K562 (cell line): ENCODE measurements at regions of chr22 and their contacts with region 1.

Region 1: DNA sequence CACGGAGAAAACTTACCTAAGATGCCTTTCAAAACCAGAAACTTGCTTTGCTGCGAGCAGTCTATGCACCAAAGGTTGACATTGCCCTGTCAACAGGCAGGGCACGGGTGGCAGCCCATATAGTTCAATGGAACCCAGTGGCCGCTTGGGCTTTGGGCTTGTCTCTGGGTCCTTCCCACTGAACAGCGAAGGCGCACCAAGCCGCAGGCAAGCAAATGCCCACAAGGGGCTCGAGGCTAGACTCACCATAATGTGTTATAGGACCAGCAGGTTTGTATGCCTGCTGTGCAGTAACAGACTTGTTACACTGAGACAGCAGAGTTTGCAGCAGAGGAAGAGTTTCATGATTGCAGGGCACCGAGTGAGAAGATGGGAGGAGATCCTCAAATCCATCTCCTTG is 20.3 kb downstream of the CLDN5 start:
- DNase-seq: peak in 2 of 4 experiments; percentile 48 to 52
- ATAC-seq: peak; percentile 50
- H3K4me3 ChIP-seq: no peak overlapping the region
- H3K27ac ChIP-seq: no peak overlapping the region
- H3K4me1 ChIP-seq: peaks cover 0 to 5% of the 10 kb centered on the region in 2 experiments; a peak in 1 of 5 replicates
- H3K27me3 ChIP-seq: no peaks in the 10 kb centered on the region
- CTCF ChIP-seq: peak; percentile 29 to 41 (median 37); a peak in 4 of 6 replicates
- EP300 ChIP-seq: no peak
- POLR2A ChIP-seq: peak; percentile 71
- RAD21 ChIP-seq: 0 out of 4 replicates have a peak, but pooled peaks of 1 of the 2 experiments have one; percentile 4

Region 2: DNA sequence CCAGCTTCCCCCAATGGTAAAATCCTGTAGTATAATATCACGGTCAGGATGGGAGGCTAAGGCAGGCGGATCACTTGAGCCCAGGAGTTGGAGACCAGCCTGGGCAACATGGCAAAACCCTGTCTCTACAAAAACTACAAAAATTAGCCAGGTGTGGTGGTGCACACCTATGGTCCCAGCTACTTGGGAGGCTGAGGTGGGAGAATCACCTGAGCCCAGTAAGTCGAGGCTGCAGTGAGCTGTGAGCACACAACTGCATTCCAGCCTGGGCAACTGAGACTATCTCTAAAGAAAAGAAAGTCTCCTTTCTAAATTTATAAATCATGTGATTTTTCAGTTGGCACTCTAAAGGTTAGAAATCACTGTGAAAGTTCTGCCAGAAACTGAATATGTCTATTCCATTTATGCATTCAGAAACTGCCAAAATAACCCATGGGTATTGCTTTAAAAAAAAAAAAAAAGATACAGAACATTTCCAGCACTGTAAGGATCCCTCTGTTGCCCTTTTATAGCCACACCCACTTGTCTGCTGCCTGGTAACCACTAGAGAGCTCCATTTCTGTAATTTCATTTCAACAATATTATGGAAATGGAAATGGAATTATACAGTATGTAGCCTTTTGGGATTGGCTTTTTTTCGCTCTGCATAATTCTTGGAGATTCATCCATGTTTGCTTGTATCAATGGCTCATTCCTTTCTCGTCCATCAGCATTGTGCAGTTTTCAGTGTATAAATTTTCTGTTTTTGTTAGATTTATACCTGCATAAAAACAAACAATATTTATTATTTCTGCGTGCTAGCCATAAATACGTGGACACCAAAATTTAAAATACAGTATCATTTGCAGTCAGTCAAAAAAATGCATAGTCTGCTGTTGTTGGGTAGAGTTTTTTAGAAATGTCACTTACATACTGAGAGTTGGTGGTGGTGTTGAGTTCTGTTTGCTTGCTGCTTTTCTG is 14.7 kb before region 1 on chr22:
- CTCF ChIA-PET with region 1: no interaction called
- POLR2A ChIA-PET with region 1: interaction called, 32 read pairs
- in situ Hi-C with region 1: no loop called
- intact Hi-C with region 1: no loop called
- DNase-seq: peak in 3 of 4 experiments; percentile 57 to 84 (median 83)
- ATAC-seq: peak; percentile 75
- H3K4me3 ChIP-seq: no peak overlapping the region
- H3K27ac ChIP-seq: no peak overlapping the region
- H3K4me1 ChIP-seq: no peaks in the 10 kb centered on the region
- H3K27me3 ChIP-seq: no peaks in the 10 kb centered on the region
- CTCF ChIP-seq: peak in 2 of 3 experiments; percentile 33 to 63; a peak in 2 of 6 replicates
- EP300 ChIP-seq: no peak
- POLR2A ChIP-seq: 0 out of 2 replicates have a peak, but pooled peaks have one; percentile 48
- RAD21 ChIP-seq: peak; percentile 33 to 57

Region 3: DNA sequence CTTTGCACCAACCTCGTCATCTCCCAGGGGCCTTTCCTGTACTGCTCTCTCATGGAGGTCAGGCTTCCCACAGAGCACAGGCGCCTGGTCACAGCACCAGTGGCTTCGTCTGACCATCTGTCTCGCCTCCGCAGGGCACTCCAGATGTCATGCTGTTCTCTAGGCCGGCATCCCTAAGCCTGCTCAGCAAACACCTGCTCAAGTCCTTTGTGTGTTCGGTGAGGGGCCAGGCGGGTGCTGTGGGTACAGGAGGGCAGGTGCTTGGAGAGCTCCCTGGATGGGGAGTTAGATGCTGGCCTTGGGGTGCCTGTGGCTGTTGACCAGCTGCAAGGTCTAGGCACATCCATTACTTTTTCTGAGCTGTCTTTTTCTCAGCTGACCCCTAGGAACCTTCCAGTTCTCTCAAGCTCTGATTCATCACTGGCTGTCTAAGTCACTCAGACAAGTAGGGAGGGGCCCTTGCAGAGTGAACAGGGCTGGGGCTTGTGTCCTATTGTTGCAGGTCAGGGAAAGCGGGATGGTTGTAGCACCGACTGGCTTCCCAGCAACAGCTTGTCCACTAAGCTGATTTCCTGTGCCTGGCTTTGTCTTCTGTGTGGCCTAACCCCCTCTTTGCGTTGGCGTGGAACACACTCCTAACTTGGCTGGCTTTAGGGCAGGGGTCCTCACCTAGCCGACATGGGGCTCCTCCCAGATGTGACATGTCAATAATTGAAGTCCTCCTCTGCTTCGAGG is 11.1 kb after region 1 on chr22:
- CTCF ChIA-PET with region 1: no interaction called
- POLR2A ChIA-PET with region 1: interaction called, 46 read pairs
- in situ Hi-C with region 1: no loop called
- intact Hi-C with region 1: no loop called
- DNase-seq: no peak
- ATAC-seq: no peak
- H3K4me3 ChIP-seq: no peak overlapping the region
- H3K27ac ChIP-seq: no peak overlapping the region
- H3K4me1 ChIP-seq: peaks cover 0 to 4% of the 10 kb centered on the region in 2 experiments; a peak in 1 of 5 replicates
- H3K27me3 ChIP-seq: no peaks in the 10 kb centered on the region
- CTCF ChIP-seq: no peak
- EP300 ChIP-seq: no peak
- POLR2A ChIP-seq: no peak
- RAD21 ChIP-seq: no peak

Region 4: DNA sequence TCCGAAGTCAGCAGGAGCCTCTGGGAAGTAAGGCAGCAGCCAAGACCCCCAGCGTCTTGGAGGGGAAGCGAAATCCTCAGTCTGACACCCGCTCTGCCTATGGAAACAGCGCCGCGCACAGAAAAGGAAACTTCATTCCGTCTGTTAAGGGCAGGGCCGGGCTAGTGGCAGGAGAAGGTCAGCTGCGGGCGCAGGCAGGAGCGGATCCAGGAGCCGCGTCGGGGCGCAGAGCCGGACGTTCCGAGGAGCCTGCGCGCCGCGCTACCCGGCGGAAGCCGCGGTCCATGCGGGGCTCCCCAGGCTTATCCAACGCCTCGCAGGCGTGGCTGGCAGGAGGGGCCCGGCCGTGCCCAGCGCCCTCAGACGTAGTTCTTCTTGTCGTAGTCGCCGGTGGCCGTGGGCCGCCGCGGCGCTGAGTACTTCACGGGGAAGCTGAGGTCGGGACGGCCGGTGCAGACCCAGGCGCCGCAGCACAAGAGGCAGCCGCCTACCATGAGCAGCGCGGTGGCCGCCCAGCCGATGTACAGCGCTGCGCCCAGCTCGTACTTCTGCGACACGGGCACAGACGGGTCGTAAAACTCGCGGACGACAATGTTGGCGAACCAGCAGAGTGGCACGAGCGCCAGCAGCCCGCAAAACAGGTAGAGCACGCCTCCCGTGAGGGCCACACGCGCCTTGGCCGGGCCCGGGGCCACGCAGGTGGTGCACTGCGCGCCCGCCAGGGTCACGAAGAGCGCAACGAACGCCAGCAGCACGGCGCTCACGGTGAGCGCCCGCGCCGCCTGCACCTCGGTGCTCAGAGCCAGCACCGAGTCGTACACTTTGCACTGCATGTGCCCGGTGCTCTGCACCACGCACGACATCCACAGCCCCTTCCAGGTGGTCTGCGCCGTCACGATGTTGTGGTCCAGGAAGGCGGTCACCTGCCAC is 19.6 kb after region 1 on chr22:
- CTCF ChIA-PET with region 1: no interaction called
- POLR2A ChIA-PET with region 1: interaction called, 27 read pairs
- in situ Hi-C with region 1: no loop called
- intact Hi-C with region 1: no loop called
- DNase-seq: peak in 2 of 4 experiments; percentile 42 to 56
- ATAC-seq: no peak
- H3K4me3 ChIP-seq: no peak overlapping the region
- H3K27ac ChIP-seq: no peak overlapping the region
- H3K4me1 ChIP-seq: peaks cover 0 to 52% of the 10 kb centered on the region in 2 experiments; a peak in 3 of 5 replicates
- H3K27me3 ChIP-seq: peaks cover 19 to 23% of the 10 kb centered on the region in 2 experiments; a peak in 4 of 5 replicates
- CTCF ChIP-seq: no peak
- EP300 ChIP-seq: no peak
- POLR2A ChIP-seq: no peak; the same call in 1 of the 2 replicates
- RAD21 ChIP-seq: no peak

Region 5: GRCh38 chr22:19644314-19645223 is 140.7 kb after region 1 on chr22:
- CTCF ChIA-PET with region 1: no interaction called
- POLR2A ChIA-PET with region 1: no interaction called
- in situ Hi-C with region 1: no loop called
- intact Hi-C with region 1: no loop called
- DNase-seq: peak; percentile 70 to 79 (median 73)
- ATAC-seq: peak; percentile 75
- H3K4me3 ChIP-seq: no peak overlapping the region
- H3K27ac ChIP-seq: peak overlapping the region; percentile 12; the same call in 2 of the 3 replicates
- H3K4me1 ChIP-seq: peaks cover 35 to 37% of the 10 kb centered on the region in 2 experiments; a peak in 4 of 5 replicates
- H3K27me3 ChIP-seq: peaks cover 0 to 6% of the 10 kb centered on the region in 2 experiments; a peak in 1 of 5 replicates
- CTCF ChIP-seq: peak in 1 of 3 experiments; percentile 15; a peak in 1 of 6 replicates
- EP300 ChIP-seq: no peak
- POLR2A ChIP-seq: no peak
- RAD21 ChIP-seq: 0 out of 4 replicates have a peak, but pooled peaks of 1 of the 2 experiments have one; percentile 3

Region 6: GRCh38 chr22:20354238-20354975 is 850.5 kb after region 1 on chr22:
- CTCF ChIA-PET with region 1: no interaction called
- POLR2A ChIA-PET with region 1: no interaction called
- in situ Hi-C with region 1: loop called (anchors 10 kb)
- intact Hi-C with region 1: no loop called
- DNase-seq: peak in 1 of 4 experiments; percentile 1
- ATAC-seq: no peak
- H3K4me3 ChIP-seq: no peak overlapping the region
- H3K27ac ChIP-seq: no peak overlapping the region
- H3K4me1 ChIP-seq: peaks cover 0 to 11% of the 10 kb centered on the region in 2 experiments; a peak in 1 of 5 replicates
- H3K27me3 ChIP-seq: peaks cover 2 to 9% of the 10 kb centered on the region in 2 experiments; a peak in 1 of 5 replicates
- CTCF ChIP-seq: no peak
- EP300 ChIP-seq: no peak
- POLR2A ChIP-seq: no peak
- RAD21 ChIP-seq: no peak